ENCODE measurements at regions of chr9 and their contacts with region 1.

Region 1: GRCh38 chr9:105535920-105536668 is 21.8 kb upstream of the FKTN start:
- DNase-seq: no peak
- ATAC-seq: no peak
- H3K4me3 ChIP-seq: no peak overlapping the region
- H3K27ac ChIP-seq: no peak overlapping the region
- H3K4me1 ChIP-seq: 0 out of 2 replicates have a peak, but pooled peaks cover 3% of the 10 kb centered on the region
- H3K27me3 ChIP-seq: no peaks in the 10 kb centered on the region
- CTCF ChIP-seq: no peak

Region 2: DNA sequence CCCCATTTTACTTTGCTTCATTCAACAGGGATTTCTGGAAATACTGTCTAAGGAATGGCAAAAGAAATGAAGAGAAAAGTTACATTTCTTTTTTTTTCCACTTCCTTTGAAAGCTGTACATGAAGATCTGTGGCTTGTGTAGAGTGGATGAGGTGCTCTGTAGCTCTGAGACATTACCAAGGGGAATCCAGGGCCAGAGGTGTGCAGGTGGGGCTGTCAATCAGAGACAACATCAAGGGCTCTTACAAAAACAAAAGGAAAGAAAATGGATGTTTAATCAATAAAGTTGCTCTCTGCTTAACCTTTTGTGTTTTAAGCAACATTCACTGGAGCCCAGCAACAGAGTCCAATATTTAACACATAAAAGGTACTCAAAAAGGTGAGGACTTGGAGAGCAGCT is 549.4 kb after region 1 on chr9:
- CTCF ChIA-PET with region 1: no interaction called
- POLR2A ChIA-PET with region 1: interaction called, 11 read pairs
- intact Hi-C with region 1: no loop called
- DNase-seq: no peak
- ATAC-seq: no peak
- H3K4me3 ChIP-seq: no peak overlapping the region
- H3K27ac ChIP-seq: no peak overlapping the region
- H3K4me1 ChIP-seq: no peaks in the 10 kb centered on the region
- H3K27me3 ChIP-seq: no peaks in the 10 kb centered on the region
- CTCF ChIP-seq: no peak

Measured in PC-3 (cell line).